Heart right ventricle (tissue), 16 donors: ENCODE measurements at regions of chr4 and their contacts with region 1.

Region 1: DNA sequence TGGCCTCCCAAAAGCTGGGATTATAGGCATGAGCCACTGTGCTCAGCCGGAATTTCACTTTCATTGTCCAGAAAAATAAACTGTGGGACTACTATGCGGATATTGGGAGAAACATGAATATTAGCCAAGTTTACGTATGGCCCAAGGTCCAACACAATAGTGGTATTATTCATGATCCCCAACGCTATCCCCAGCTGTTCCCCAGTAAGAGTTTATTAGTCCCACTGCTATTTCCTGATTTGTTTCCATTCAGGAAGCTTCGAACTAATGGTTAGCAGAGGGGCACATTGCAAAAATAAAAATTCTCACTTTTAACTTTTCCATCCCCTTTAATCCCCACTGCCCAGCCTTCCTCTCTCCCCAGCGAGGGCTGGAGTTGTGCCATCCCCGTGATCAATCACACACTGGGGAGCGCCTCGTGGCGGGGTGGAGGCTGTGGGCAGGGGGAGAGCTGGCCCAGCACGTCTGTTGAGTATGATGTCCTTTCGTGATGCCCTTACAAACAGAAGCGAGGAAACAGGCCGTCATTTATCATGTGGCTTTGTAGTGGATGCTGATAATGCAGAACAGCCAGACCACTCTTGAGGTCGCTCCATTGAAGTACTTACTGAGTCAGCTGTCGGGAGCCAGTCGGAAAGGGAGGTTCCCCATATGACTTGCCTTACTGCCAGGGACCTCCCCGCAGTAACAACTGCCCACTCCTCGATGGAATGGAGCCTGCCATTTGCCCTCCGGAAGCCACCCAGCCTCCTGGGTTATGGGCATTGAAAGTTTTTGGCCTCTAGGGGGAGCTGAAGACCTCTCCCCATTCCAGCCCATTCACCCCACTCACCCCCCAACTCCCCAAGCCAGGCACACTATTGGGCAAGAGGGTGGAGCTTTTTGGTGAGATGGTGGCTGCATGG is 117.0 kb downstream of the KDR start:
- DNase-seq: no peak
- ATAC-seq: peak in 3 of 8 donors; percentile 43 to 46 (median 44)
- H3K4me3 ChIP-seq: no peak overlapping the region
- H3K27ac ChIP-seq: peak overlapping the region in 1 of 10 donors; percentile 11
- H3K4me1 ChIP-seq: peaks cover 0 to 26% (median 18%) of the 10 kb centered on the region in 9 donors
- H3K27me3 ChIP-seq: no peaks in the 10 kb centered on the region
- CTCF ChIP-seq: peak in 7 of 9 donors; percentile 17 to 47 (median 32)

Region 2: GRCh38 chr4:54971474-54971950 is 36.9 kb before region 1 on chr4:
- intact Hi-C with region 1: no loop called
- DNase-seq: no peak
- ATAC-seq: peak in 7 of 8 donors; percentile 63 to 83 (median 74)
- H3K4me3 ChIP-seq: no peak overlapping the region
- H3K27ac ChIP-seq: no peak overlapping the region
- H3K4me1 ChIP-seq: no peaks in the 10 kb centered on the region
- H3K27me3 ChIP-seq: peaks cover 0 to 8% (median 0%) of the 10 kb centered on the region in 7 donors
- CTCF ChIP-seq: peak; percentile 50 to 87 (median 70)

Region 3: GRCh38 chr4:55116450-55116849 is 108.0 kb after region 1 on chr4:
- intact Hi-C with region 1: loop called in 4 of 10 experiments (anchors 5 to 10 kb)
- DNase-seq: no peak
- ATAC-seq: peak in 6 of 8 donors; percentile 25 to 61 (median 49)
- H3K4me3 ChIP-seq: no peak overlapping the region
- H3K27ac ChIP-seq: peak overlapping the region in 4 of 10 donors; percentile 4 to 76 (median 32)
- H3K4me1 ChIP-seq: peaks cover 0 to 44% (median 18%) of the 10 kb centered on the region in 9 donors
- H3K27me3 ChIP-seq: no peaks in the 10 kb centered on the region
- CTCF ChIP-seq: no peak

Region 4: GRCh38 chr4:55175779-55176231 is 167.4 kb after region 1 on chr4:
- intact Hi-C with region 1: loop called in 4 of 10 experiments (anchors 5 to 10 kb)
- DNase-seq: no peak
- ATAC-seq: peak in 1 of 8 donors; percentile 39
- H3K4me3 ChIP-seq: no peak overlapping the region
- H3K27ac ChIP-seq: peak overlapping the region in 6 of 10 donors; percentile 44 to 84 (median 53)
- H3K4me1 ChIP-seq: peaks cover 0 to 60% (median 16%) of the 10 kb centered on the region in 9 donors
- H3K27me3 ChIP-seq: no peaks in the 10 kb centered on the region
- CTCF ChIP-seq: no peak

Region 5: DNA sequence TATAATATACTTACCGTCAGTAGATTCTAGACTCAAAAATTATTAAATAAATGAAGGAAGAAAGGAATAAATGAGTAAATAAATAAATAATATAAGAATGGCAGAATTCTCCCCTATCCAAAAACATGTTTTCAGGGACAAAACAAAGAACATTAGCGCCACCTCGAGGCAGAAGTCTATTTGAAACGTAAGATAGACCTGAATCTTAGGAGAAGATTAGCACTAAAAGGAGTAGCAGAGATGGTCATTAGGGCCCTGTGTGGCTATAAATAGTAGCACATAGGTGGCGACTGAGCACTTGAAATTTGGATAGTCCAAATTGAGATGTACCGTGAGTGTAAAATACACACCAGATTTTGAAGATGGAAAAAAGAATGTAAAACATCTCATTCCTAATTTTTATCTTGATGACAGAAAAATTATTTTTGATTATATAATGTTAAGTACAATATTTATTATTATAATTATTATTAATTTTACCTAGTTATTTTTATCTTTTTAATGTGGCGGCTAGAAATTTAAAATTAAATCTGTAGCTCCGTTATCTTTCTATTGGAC is 313.4 kb after region 1 on chr4:
- intact Hi-C with region 1: loop called in 2 of 10 experiments (anchors 5 kb)
- DNase-seq: peak in 1 of 2 donors; percentile 88
- ATAC-seq: peak in 6 of 8 donors; percentile 17 to 69 (median 52)
- H3K4me3 ChIP-seq: no peak overlapping the region
- H3K27ac ChIP-seq: no peak overlapping the region
- H3K4me1 ChIP-seq: peaks cover 0 to 27% (median 13%) of the 10 kb centered on the region in 9 donors
- H3K27me3 ChIP-seq: no peaks in the 10 kb centered on the region
- CTCF ChIP-seq: peak; percentile 44 to 84 (median 68)

Region 6: DNA sequence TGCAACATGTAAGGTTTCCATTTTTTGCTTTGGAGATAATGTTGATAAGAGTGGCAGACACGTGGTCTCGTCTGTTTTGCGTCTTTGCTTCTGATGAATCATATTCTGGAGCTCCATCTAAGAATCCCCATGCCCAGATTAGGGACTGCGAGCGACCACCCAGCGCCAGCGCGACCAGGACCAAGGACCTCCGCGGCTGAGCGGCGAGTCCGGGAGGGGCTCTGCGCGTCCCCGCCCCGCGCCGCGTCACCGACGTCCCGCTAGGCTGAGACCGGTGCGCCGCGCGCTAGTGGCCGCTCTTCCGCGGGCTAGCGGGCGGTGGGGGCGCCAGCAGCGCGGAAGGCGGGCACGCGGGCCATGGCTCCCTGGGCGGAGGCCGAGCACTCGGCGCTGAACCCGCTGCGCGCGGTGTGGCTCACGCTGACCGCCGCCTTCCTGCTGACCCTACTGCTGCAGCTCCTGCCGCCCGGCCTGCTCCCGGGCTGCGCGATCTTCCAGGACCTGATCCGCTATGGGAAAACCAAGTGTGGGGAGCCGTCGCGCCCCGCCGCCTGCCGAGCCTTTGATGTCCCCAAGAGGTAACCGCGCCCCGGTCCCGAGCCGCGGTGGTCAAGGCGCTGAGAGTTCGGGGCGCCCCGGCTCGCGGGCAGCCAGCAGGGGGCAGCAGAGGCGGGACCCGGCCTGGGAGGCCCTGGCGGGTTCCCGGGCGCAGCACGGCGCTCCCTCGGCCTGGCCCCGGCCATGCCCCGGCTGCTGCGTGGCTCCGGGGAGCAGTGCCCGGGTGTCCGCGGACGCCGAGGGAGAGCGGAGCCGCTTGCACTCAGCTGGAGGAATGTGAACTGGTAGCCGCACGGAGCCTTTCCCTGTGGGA is 337.8 kb after region 1 on chr4 and contains the start of gene SRD5A3:
- intact Hi-C with region 1: no loop called
- DNase-seq: peak; percentile 85 to 91
- ATAC-seq: peak; percentile 96 to 99 (median 97)
- H3K4me3 ChIP-seq: peak within 1 kb of the TSS; percentile 39 to 91 (median 82)
- H3K27ac ChIP-seq: peak within 1 kb of the TSS; percentile 95 to 99 (median 96)
- H3K4me1 ChIP-seq: peaks cover 5 to 29% (median 15%) of the 10 kb centered on the region in 9 donors
- H3K27me3 ChIP-seq: no peaks in the 10 kb centered on the region
- CTCF ChIP-seq: peak; percentile 89 to 98 (median 96)
- total RNA-seq, gene SRD5A3: 4.4 to 14.6 (median 7.7) TPM